Mammary epithelial cell (primary cell): ENCODE measurements at regions of chr11 and their contacts with region 1.

Region 1: GRCh38 chr11:112113539-112114457 is 27.1 kb downstream of the SDHD start:
- DNase-seq: peak; percentile 54
- H3K4me3 ChIP-seq: no peak overlapping the region
- H3K27ac ChIP-seq: no peak overlapping the region
- H3K4me1 ChIP-seq: no peaks in the 10 kb centered on the region
- H3K27me3 ChIP-seq: no peaks in the 10 kb centered on the region
- CTCF ChIP-seq: peak; percentile 37 to 70

Region 2: DNA sequence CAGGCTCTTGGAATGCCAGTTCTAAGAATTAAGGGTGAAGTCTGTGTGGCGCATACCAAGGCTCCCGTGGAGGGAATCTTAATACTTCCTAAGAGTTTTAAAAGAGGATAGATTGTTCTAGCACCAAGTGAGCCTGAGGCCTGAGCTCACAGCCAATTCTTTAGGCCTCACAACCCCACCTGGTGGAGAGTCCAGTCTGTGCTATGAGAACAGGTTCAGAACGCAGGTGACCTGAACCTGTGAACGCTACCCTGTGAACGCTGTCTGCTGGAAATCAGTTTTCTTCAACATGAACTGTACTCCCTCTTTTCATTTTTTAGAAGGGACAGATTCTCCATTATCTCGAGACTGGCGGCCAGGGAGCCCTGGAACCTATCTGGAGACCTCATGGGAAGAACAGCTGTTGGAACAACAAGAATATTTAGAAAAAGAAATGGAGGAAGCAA is 131.8 kb before region 1 on chr11:
- CTCF ChIA-PET with region 1: no interaction called
- dilution Hi-C with region 1: no loop called
- in situ Hi-C with region 1: no loop called
- intact Hi-C with region 1: no loop called
- DNase-seq: peak; percentile 59
- H3K4me3 ChIP-seq: no peak overlapping the region
- H3K27ac ChIP-seq: no peak overlapping the region
- H3K4me1 ChIP-seq: peaks cover 21% of the 10 kb centered on the region
- H3K27me3 ChIP-seq: no peaks in the 10 kb centered on the region
- CTCF ChIP-seq: peak; percentile 76 to 86

Region 3: GRCh38 chr11:112156956-112157766 is 43.4 kb after region 1 on chr11:
- CTCF ChIA-PET with region 1: interaction called, 19 read pairs
- dilution Hi-C with region 1: no loop called
- in situ Hi-C with region 1: loop called in 1 of 2 experiments (anchors 10 kb)
- intact Hi-C with region 1: no loop called
- DNase-seq: peak; percentile 100
- H3K4me3 ChIP-seq: no peak overlapping the region
- H3K27ac ChIP-seq: peak overlapping the region; percentile 95
- H3K4me1 ChIP-seq: peaks cover 44% of the 10 kb centered on the region
- H3K27me3 ChIP-seq: no peaks in the 10 kb centered on the region
- CTCF ChIP-seq: no peak

Region 4: GRCh38 chr11:112163875-112164685 is 50.3 kb after region 1 on chr11 and contains the start of gene IL18:
- CTCF ChIA-PET with region 1: no interaction called
- dilution Hi-C with region 1: no loop called
- in situ Hi-C with region 1: loop called in 1 of 2 experiments (anchors 10 kb)
- intact Hi-C with region 1: no loop called
- DNase-seq: no peak
- H3K4me3 ChIP-seq: peak within 1 kb of the TSS in 2 of 3 experiments; percentile 14 to 15
- H3K27ac ChIP-seq: peak within 1 kb of the TSS; percentile 97
- H3K4me1 ChIP-seq: peaks cover 51% of the 10 kb centered on the region
- H3K27me3 ChIP-seq: no peaks in the 10 kb centered on the region
- CTCF ChIP-seq: no peak
- total RNA-seq, gene IL18: 1.3 to 2.2 TPM

Region 5: DNA sequence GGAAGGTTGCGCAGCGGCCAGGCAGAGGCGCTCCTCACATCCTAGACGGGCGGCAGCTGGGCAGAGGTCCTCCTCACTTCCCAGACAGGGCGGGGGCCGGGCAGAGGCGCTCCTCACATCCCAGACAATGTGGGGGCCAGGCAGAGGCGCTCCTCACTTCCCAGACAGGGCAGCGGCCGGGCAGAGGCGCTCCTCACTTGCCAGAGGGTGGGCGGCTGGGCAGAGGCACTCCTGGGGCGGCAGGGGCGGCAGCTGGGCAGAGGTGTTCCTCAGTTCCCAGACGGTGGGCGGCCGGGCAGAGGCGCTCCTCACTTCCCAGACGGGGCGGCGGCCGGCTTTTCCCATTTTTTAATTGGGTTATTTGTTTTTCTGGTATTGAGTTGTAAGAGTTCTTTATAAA is 92.3 kb after region 1 on chr11:
- CTCF ChIA-PET with region 1: no interaction called
- dilution Hi-C with region 1: no loop called
- in situ Hi-C with region 1: no loop called
- intact Hi-C with region 1: no loop called
- DNase-seq: no peak
- H3K4me3 ChIP-seq: no peak overlapping the region
- H3K27ac ChIP-seq: no peak overlapping the region
- H3K4me1 ChIP-seq: no peaks in the 10 kb centered on the region
- H3K27me3 ChIP-seq: no peaks in the 10 kb centered on the region
- CTCF ChIP-seq: no peak

Region 6: GRCh38 chr11:112219476-112220232 is 105.9 kb after region 1 on chr11:
- CTCF ChIA-PET with region 1: no interaction called
- dilution Hi-C with region 1: no loop called
- in situ Hi-C with region 1: no loop called
- intact Hi-C with region 1: loop called (anchors 1 kb)
- DNase-seq: peak; percentile 53
- H3K4me3 ChIP-seq: no peak overlapping the region
- H3K27ac ChIP-seq: no peak overlapping the region
- H3K4me1 ChIP-seq: peaks cover 6% of the 10 kb centered on the region
- H3K27me3 ChIP-seq: no peaks in the 10 kb centered on the region
- CTCF ChIP-seq: peak; percentile 63 to 64

Region 7: DNA sequence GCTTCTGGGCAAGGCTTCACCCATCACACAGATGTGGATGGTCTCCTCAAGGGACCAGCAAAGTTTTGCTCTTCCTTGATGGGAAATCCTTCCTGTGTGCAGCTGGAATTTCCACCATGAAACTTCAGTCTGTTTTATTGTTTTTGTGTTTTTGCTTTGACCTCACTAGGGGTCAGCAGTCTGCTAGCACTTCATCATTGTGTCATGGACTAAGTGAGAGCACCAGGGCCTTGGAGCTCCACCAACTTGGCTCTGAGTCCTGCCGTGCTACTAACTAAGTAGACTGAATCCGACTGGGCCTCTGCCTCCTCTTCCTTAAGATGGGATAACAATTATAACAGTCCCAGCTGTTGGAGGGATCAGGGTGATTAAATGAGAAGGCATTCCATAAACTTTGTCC is 541.6 kb after region 1 on chr11:
- CTCF ChIA-PET with region 1: no interaction called
- dilution Hi-C with region 1: no loop called
- in situ Hi-C with region 1: no loop called
- intact Hi-C with region 1: no loop called
- DNase-seq: no peak
- H3K4me3 ChIP-seq: no peak overlapping the region
- H3K27ac ChIP-seq: no peak overlapping the region
- H3K4me1 ChIP-seq: peaks cover 21% of the 10 kb centered on the region
- H3K27me3 ChIP-seq: no peaks in the 10 kb centered on the region
- CTCF ChIP-seq: no peak